GM10248 (cell line): ENCODE measurements at regions of chr7 and their contacts with region 1.

Region 1: GRCh38 chr7:92809397-92810241 is 26.8 kb downstream of the CDK6 start:
- DNase-seq: peak; percentile 57
- CTCF ChIP-seq: no peak

Region 2: GRCh38 chr7:92751902-92752901 is 57.4 kb before region 1 on chr7:
- CTCF ChIA-PET with region 1: no interaction called
- POLR2A ChIA-PET with region 1: no interaction called
- DNase-seq: no peak
- CTCF ChIP-seq: no peak

Region 3: DNA sequence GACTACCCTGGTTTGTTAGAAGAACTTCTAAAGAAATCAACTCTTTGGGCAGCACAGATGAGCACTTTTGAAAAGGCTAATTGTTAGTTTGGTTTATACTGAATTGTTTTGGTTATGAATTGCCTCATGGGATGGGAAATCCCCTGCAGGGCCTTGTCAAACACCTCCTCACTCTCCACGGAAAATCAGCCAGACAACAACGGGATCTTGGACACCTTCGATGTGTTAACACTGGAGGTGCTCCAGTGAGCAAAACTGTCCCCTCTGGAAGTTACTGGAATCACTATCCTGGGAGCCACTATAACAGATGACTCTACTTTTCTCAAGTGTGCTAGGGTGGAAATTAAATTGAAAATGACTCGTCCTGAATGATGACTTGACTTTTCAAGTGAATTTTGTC is 11.9 kb before region 1 on chr7:
- CTCF ChIA-PET with region 1: interaction called, 10 read pairs
- POLR2A ChIA-PET with region 1: no interaction called
- DNase-seq: peak; percentile 13
- CTCF ChIP-seq: no peak